Heart left ventricle (tissue), 16 donors: ENCODE measurements at regions of chr22 and their contacts with region 1.

Region 1: GRCh38 chr22:42933481-42934091 is 76.5 kb upstream of the ARFGAP3 start:
- DNase-seq: peak in 4 of 5 donors; percentile 44 to 56 (median 52)
- ATAC-seq: peak; percentile 50 to 70 (median 56)
- H3K4me3 ChIP-seq: peak overlapping the region in 6 of 12 donors; percentile 1 to 20 (median 6)
- H3K27ac ChIP-seq: peak overlapping the region; percentile 79 to 93 (median 86)
- H3K4me1 ChIP-seq: peaks cover 42 to 100% (median 96%) of the 10 kb centered on the region in 12 donors
- H3K27me3 ChIP-seq: no peaks in the 10 kb centered on the region
- CTCF ChIP-seq: no peak
- POLR2A ChIP-seq: no peak

Region 2: GRCh38 chr22:42967933-42968332 is 34.3 kb after region 1 on chr22:
- intact Hi-C with region 1: loop called in 1 of 10 experiments (anchors 5 kb)
- DNase-seq: peak; percentile 61 to 85 (median 77)
- ATAC-seq: peak; percentile 67 to 88 (median 84)
- H3K4me3 ChIP-seq: no peak overlapping the region
- H3K27ac ChIP-seq: peak overlapping the region in 1 of 12 donors; percentile 1
- H3K4me1 ChIP-seq: peaks cover 0 to 45% (median 18%) of the 10 kb centered on the region in 12 donors
- H3K27me3 ChIP-seq: no peaks in the 10 kb centered on the region
- CTCF ChIP-seq: peak in 9 of 12 donors; percentile 22 to 57 (median 44)
- POLR2A ChIP-seq: no peak

Region 3: DNA sequence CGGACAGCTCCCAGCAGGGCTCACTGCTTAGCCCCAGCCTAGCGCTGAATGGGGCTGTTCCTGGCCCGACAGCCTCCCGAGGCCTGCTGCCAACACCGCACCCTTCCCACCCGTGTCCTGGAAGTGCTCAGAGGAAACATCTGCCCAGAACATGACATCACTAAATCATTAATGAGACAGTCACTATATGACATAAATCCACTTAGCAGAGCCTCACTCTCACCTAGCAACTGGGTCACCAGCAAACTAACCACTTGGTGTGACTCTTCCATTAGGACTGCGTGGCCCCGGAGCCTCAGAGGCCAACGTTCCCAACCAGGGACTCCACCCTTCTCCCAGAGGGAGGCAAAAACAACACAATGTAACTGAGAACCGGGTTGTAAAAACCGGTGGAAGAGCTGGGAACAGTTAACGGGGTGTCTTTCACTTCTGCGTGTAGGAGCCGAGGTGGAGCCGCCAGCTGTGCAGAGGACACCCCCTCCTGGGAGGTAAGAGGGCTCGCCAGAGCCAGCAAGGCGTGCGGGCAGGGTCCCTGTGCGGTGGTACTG is 102.8 kb after region 1 on chr22:
- intact Hi-C with region 1: no loop called
- DNase-seq: peak; percentile 72 to 83 (median 78)
- ATAC-seq: peak; percentile 83 to 96 (median 88)
- H3K4me3 ChIP-seq: peak overlapping the region in 6 of 12 donors; percentile 6 to 29 (median 18)
- H3K27ac ChIP-seq: peak overlapping the region in 9 of 12 donors; percentile 30 to 67 (median 57)
- H3K4me1 ChIP-seq: peaks cover 0 to 15% (median 0%) of the 10 kb centered on the region in 12 donors
- H3K27me3 ChIP-seq: no peaks in the 10 kb centered on the region
- CTCF ChIP-seq: no peak
- POLR2A ChIP-seq: no peak